ENCODE measurements at regions of chr7 and their contacts with region 1.

Region 1: GRCh38 chr7:51162724-51163329 is 153.8 kb downstream of the COBL start:
- DNase-seq: peak; percentile 77
- H3K4me3 ChIP-seq: no peak overlapping the region
- H3K27ac ChIP-seq: no peak overlapping the region
- H3K4me1 ChIP-seq: peaks cover 0 to 10% (median 0%) of the 10 kb centered on the region in 4 donors
- H3K27me3 ChIP-seq: no peaks in the 10 kb centered on the region
- CTCF ChIP-seq: peak; percentile 70 to 83 (median 76)
- EP300 ChIP-seq: no peak
- POLR2A ChIP-seq: no peak

Region 2: DNA sequence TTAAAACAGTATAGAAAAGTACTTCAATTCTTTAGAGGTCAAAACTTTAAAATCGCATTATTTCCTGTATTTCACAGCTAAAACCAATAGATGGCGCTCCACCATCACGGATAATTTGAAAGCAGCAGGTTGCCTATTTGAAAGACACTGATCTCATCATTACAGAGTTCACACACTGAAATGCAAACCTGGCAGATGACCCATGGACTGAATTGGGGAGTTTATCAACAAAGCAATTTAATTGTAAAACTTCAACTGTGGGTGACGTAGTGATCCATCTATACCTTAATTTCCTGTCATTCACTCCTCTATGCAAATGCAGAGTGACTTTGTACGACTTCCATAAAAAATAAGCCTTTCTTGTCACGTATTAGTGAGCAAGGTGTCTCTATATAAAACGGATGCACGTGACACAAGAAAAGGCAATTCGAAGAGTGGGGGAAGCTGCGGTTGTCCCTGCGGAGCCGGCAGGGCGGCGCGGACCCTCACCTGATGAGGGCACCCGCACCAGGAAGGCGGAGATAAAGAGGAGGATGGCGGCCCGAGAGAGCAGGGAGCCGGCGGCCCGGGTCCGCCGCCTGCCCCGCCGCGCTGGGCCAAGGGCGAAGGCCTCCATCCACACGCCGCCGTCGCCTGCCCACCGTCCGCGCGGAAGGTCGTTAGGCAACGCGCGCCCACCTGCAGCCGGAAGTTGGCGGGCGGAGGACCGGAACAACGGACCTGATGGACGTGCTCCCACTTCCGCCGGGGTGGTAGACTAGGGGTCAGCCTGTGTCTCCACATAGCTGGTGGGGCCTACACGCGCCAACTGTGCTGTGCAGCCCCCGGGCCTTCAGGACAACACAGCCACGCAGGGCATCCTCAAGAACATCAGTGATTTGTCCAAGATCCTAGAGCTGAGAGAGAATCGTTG is 1070.0 kb before region 1 on chr7 and contains the start of gene ZPBP:
- in situ Hi-C with region 1: loop called in 1 of 4 experiments (anchors 25 kb)
- intact Hi-C with region 1: no loop called
- DNase-seq: no peak
- H3K4me3 ChIP-seq: peak within 1 kb of the TSS; percentile 23 to 42 (median 32)
- H3K27ac ChIP-seq: no peak within 1 kb of the TSS
- H3K4me1 ChIP-seq: peaks cover 0 to 6% (median 2%) of the 10 kb centered on the region in 4 donors
- H3K27me3 ChIP-seq: no peaks in the 10 kb centered on the region
- CTCF ChIP-seq: peak; percentile 64 to 75 (median 69)
- EP300 ChIP-seq: no peak
- POLR2A ChIP-seq: no peak
- total RNA-seq, gene ZPBP: not detected

Region 3: GRCh38 chr7:50142425-50143017 is 1020.3 kb before region 1 on chr7:
- in situ Hi-C with region 1: loop called in 1 of 4 experiments (anchors 25 kb)
- intact Hi-C with region 1: no loop called
- DNase-seq: no peak
- H3K4me3 ChIP-seq: no peak overlapping the region
- H3K27ac ChIP-seq: no peak overlapping the region
- H3K4me1 ChIP-seq: peaks cover 0 to 4% (median 0%) of the 10 kb centered on the region in 4 donors
- H3K27me3 ChIP-seq: no peaks in the 10 kb centered on the region
- CTCF ChIP-seq: peak; percentile 55 to 73 (median 63)
- EP300 ChIP-seq: no peak
- POLR2A ChIP-seq: no peak

Region 4: GRCh38 chr7:51111241-51111940 is 51.4 kb before region 1 on chr7:
- in situ Hi-C with region 1: no loop called
- intact Hi-C with region 1: no loop called
- DNase-seq: no peak
- H3K4me3 ChIP-seq: no peak overlapping the region
- H3K27ac ChIP-seq: no peak overlapping the region
- H3K4me1 ChIP-seq: no peaks in the 10 kb centered on the region
- H3K27me3 ChIP-seq: no peaks in the 10 kb centered on the region
- CTCF ChIP-seq: no peak
- EP300 ChIP-seq: no peak
- POLR2A ChIP-seq: no peak

Region 5: DNA sequence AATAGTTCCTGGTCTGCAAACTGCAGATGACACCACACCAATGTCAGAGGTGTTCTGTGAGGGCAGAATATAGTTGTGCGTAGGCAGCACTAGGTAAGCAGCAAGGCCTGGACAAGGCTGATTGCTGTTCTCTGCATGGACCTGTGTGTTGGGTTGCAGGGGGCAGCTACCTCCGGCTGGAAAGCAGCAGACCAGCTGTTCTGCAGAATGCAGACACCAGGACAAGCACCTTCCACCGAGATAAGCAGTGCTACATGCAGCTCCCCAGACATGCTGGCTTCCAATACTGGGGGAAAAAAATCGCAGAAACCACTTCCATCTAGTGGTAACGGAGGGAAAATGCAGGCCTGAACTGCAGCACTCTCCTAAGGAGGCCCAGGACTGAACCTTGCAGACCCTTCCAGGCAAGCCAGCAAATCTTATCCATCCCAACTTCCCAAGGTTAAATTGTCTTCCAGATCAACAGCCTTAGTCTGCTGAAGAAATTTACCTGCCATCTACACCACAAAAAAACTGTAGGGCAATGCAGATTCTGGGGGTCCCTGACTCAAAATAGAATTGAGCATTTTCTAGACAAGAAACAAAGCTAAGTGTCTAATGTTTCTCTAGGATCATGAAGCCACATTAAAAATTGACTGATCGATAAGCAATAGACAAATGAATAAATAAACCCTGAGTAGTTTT is 204.2 kb after region 1 on chr7:
- in situ Hi-C with region 1: loop called in 2 of 4 experiments (anchors 5 to 10 kb)
- intact Hi-C with region 1: loop called (anchors 5 kb)
- DNase-seq: peak; percentile 34
- H3K4me3 ChIP-seq: no peak overlapping the region
- H3K27ac ChIP-seq: no peak overlapping the region
- H3K4me1 ChIP-seq: no peaks in the 10 kb centered on the region
- H3K27me3 ChIP-seq: no peaks in the 10 kb centered on the region
- CTCF ChIP-seq: peak; percentile 62 to 87 (median 74)
- EP300 ChIP-seq: no peak
- POLR2A ChIP-seq: no peak